GM12878 (cell line): ENCODE measurements at regions of chr4 and their contacts with region 1.

Region 1: DNA sequence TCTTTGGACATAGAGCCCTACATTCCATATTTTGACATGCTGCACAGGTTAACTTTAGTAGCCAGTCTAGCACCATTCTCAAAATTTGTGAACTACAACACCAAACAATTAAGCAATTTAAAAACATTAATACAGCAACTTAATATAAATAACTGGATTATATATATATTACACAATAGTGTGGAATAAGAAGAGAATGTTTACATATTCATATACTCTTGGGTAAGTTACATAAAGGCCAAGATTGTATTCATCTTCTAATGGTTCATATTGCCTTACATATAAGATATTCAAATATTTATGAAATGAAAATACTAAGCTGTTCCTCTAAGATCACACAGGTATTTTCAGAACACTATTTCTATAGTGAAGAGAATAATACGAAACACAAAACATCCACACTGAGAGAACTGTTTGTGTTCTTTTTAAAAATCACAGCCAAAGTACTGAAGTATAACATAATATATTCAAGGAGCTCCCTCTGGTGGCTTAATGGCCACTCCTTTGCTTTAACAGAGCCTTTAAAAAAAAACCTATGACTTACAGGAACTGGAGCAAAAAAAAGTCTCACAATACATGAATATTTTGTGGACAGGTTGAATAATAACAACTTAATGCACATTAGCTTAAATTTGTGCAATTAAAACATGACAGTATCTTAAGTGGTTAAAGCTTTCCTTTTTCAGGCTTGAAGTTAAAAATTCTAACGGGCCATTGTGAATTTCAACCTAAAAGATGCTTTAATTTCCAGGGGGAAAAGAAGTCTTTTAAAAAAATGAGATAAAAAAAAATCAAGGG is 46.2 kb downstream of the NEK1 start:
- DNase-seq: no peak
- ATAC-seq: peak; percentile 92
- H3K4me3 ChIP-seq: no peak overlapping the region
- H3K27ac ChIP-seq: no peak overlapping the region
- H3K4me1 ChIP-seq: no peaks in the 10 kb centered on the region
- H3K27me3 ChIP-seq: no peaks in the 10 kb centered on the region
- CTCF ChIP-seq: peak; percentile 47 to 69 (median 61); a peak in 5 of 6 replicates
- EP300 ChIP-seq: no peak
- POLR2A ChIP-seq: no peak
- RAD21 ChIP-seq: peak; percentile 73

Region 2: DNA sequence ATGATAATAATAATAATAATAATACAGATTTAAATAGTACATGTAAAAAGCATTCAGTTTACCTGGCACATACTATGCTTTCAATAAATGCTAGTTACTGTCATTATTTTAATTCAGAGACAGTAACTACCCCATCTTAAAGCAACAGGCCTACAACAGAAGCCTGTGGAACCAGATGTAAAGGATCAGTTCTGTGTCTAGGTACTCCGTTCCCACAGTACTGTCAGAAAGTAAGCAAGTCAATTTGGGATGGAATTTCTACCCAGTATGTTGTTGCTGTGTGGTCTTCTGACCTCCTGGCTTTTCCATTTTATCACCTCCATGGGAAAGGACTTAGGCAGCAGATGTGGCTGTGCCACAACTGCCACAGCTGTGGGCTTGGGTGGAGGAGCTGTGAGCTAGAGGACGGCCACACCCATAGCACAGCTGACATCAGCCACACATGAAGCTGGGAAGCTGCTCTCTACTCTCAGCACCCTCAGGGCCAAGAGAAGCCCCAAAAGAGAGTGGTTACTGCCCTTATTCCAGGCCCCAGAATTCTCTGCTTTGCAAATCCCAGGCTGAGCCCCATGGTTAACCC is 659.0 kb before region 1 on chr4:
- CTCF ChIA-PET with region 1: no interaction called
- POLR2A ChIA-PET with region 1: interaction called, 11 read pairs
- RAD21 ChIA-PET with region 1: no interaction called
- SMC1A ChIA-PET with region 1: interaction called, 3 read pairs
- in situ Hi-C with region 1: no loop called
- intact Hi-C with region 1: no loop called
- DNase-seq: no peak
- ATAC-seq: no peak
- H3K4me3 ChIP-seq: no peak overlapping the region
- H3K27ac ChIP-seq: no peak overlapping the region
- H3K4me1 ChIP-seq: no peaks in the 10 kb centered on the region
- H3K27me3 ChIP-seq: no peaks in the 10 kb centered on the region
- CTCF ChIP-seq: no peak
- EP300 ChIP-seq: no peak
- POLR2A ChIP-seq: no peak
- RAD21 ChIP-seq: no peak

Region 3: GRCh38 chr4:169582205-169582604 is 16.0 kb after region 1 on chr4:
- CTCF ChIA-PET with region 1: interaction called, 14 read pairs
- POLR2A ChIA-PET with region 1: no interaction called
- RAD21 ChIA-PET with region 1: no interaction called
- SMC1A ChIA-PET with region 1: no interaction called
- in situ Hi-C with region 1: no loop called
- intact Hi-C with region 1: no loop called
- DNase-seq: peak; percentile 16
- ATAC-seq: peak; percentile 88
- H3K4me3 ChIP-seq: no peak overlapping the region
- H3K27ac ChIP-seq: no peak overlapping the region
- H3K4me1 ChIP-seq: no peaks in the 10 kb centered on the region
- H3K27me3 ChIP-seq: no peaks in the 10 kb centered on the region
- CTCF ChIP-seq: peak in 1 of 3 experiments; percentile 17; a peak in 1 of 6 replicates
- EP300 ChIP-seq: no peak
- POLR2A ChIP-seq: no peak
- RAD21 ChIP-seq: no peak